ENCODE measurements at regions of chr17 and their contacts with region 1.

Region 1: GRCh38 chr17:30336369-30337171 is 2.7 kb upstream of the TMIGD1 start:
- DNase-seq: peak; percentile 61
- ATAC-seq: peak; percentile 86
- H3K4me3 ChIP-seq: no peak overlapping the region
- H3K27ac ChIP-seq: no peak overlapping the region
- H3K4me1 ChIP-seq: 0 out of 2 replicates have a peak, but pooled peaks cover 4% of the 10 kb centered on the region
- H3K27me3 ChIP-seq: no peaks in the 10 kb centered on the region
- CTCF ChIP-seq: peak; percentile 86

Region 2: DNA sequence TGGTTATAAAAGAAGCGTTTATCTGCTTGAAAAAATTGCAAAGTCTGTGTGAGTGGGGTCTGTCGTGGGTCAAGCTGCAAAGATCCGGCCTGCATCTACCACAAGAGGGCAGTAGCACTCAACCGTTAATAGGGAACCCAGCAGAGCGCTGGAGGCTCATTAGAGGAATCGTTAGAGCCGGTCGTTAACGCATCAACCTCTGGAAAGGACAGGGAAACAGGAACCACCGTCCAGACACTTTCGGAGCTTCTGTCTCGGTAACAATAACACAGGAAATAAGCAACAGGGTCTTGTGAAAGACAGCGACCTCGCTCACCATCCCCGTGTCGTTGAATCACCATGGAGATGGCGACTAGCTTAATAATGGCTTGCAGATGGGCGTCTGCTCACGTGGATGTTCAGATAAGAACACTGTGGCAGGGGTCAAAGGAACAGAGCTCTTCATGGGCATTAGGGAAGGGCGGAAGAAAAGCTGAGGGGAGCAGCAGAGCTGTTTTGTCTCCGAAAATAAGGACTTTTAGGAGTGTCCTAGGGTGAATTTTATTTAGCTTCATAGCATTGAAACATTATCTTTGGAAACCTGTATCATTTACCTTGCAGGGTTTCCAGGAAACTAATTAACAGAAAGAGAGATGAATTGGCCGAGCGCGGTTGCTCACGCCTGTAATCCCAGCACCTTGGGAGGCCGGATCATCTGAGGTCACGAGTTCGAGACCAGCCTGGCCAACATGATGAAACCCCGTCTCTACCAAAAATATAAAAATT is 231.8 kb before region 1 on chr17:
- CTCF ChIA-PET with region 1: interaction called, 18 read pairs
- POLR2A ChIA-PET with region 1: no interaction called
- in situ Hi-C with region 1: no loop called
- intact Hi-C with region 1: no loop called
- DNase-seq: peak; percentile 73
- ATAC-seq: peak; percentile 98
- H3K4me3 ChIP-seq: peak overlapping the region; percentile 46 to 77
- H3K27ac ChIP-seq: peak overlapping the region; percentile 79
- H3K4me1 ChIP-seq: 0 out of 2 replicates have a peak, but pooled peaks cover 3% of the 10 kb centered on the region
- H3K27me3 ChIP-seq: no peaks in the 10 kb centered on the region
- CTCF ChIP-seq: peak; percentile 92

Region 3: GRCh38 chr17:30124273-30124796 is 212.2 kb before region 1 on chr17:
- CTCF ChIA-PET with region 1: interaction called, 4 read pairs
- POLR2A ChIA-PET with region 1: no interaction called
- in situ Hi-C with region 1: no loop called
- intact Hi-C with region 1: loop called (anchors 1 kb)
- DNase-seq: no peak
- ATAC-seq: no peak
- H3K4me3 ChIP-seq: no peak overlapping the region
- H3K27ac ChIP-seq: no peak overlapping the region
- H3K4me1 ChIP-seq: peaks cover 4% of the 10 kb centered on the region; the same call in 1 of the 2 replicates
- H3K27me3 ChIP-seq: no peaks in the 10 kb centered on the region
- CTCF ChIP-seq: no peak

Region 4: DNA sequence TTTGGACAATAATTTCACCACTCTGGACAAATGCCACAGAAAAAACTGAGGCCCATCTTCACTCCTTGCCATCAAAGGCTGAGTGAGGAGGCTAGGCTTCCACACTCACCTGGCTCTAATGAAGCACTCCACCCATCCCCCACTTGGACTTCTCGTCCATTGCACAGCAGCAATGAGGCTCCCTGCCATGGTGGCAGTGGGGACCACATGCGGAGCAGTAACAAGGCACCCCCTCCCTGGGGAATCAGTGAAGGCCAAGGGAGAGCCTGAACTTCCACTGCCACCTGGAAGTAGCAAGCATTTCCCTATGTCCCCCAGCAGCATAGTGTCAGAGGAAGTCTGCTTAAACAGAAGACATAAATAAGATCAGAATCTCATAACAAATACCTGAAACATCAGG is 138.6 kb after region 1 on chr17:
- CTCF ChIA-PET with region 1: no interaction called
- POLR2A ChIA-PET with region 1: interaction called, 10 read pairs
- in situ Hi-C with region 1: no loop called
- intact Hi-C with region 1: no loop called
- DNase-seq: no peak
- ATAC-seq: no peak
- H3K4me3 ChIP-seq: no peak overlapping the region
- H3K27ac ChIP-seq: no peak overlapping the region
- H3K4me1 ChIP-seq: peaks cover 12% of the 10 kb centered on the region
- H3K27me3 ChIP-seq: no peaks in the 10 kb centered on the region
- CTCF ChIP-seq: no peak

Region 5: GRCh38 chr17:30819971-30820705 is 483.6 kb after region 1 on chr17:
- CTCF ChIA-PET with region 1: interaction called, 10 read pairs
- POLR2A ChIA-PET with region 1: no interaction called
- in situ Hi-C with region 1: no loop called
- intact Hi-C with region 1: no loop called
- DNase-seq: no peak
- ATAC-seq: no peak
- H3K4me3 ChIP-seq: no peak overlapping the region
- H3K27ac ChIP-seq: no peak overlapping the region
- H3K4me1 ChIP-seq: peaks cover 19% of the 10 kb centered on the region
- H3K27me3 ChIP-seq: no peaks in the 10 kb centered on the region
- CTCF ChIP-seq: no peak